Aorta (tissue), 5 donors: ENCODE measurements at regions of chrX and their contacts with region 1.

Region 1: GRCh38 chrX:47560831-47561652 is at the start of gene ARAF:
- DNase-seq: peak; percentile 96 to 99
- ATAC-seq: peak; percentile 95
- H3K4me3 ChIP-seq: peak within 1 kb of the TSS; percentile 31 to 80
- H3K27ac ChIP-seq: peak within 1 kb of the TSS in 1 of 2 donors; percentile 95
- H3K4me1 ChIP-seq: no peaks in the 10 kb centered on the region
- H3K27me3 ChIP-seq: no peaks in the 10 kb centered on the region
- total RNA-seq, gene ARAF: 51.5 to 59.0 TPM

Region 2: GRCh38 chrX:47515941-47516649 is 44.9 kb before region 1 on chrX:
- intact Hi-C with region 1: no loop called
- DNase-seq: no peak
- ATAC-seq: no peak
- H3K4me3 ChIP-seq: no peak overlapping the region
- H3K27ac ChIP-seq: no peak overlapping the region
- H3K4me1 ChIP-seq: no peaks in the 10 kb centered on the region
- H3K27me3 ChIP-seq: no peaks in the 10 kb centered on the region

Region 3: DNA sequence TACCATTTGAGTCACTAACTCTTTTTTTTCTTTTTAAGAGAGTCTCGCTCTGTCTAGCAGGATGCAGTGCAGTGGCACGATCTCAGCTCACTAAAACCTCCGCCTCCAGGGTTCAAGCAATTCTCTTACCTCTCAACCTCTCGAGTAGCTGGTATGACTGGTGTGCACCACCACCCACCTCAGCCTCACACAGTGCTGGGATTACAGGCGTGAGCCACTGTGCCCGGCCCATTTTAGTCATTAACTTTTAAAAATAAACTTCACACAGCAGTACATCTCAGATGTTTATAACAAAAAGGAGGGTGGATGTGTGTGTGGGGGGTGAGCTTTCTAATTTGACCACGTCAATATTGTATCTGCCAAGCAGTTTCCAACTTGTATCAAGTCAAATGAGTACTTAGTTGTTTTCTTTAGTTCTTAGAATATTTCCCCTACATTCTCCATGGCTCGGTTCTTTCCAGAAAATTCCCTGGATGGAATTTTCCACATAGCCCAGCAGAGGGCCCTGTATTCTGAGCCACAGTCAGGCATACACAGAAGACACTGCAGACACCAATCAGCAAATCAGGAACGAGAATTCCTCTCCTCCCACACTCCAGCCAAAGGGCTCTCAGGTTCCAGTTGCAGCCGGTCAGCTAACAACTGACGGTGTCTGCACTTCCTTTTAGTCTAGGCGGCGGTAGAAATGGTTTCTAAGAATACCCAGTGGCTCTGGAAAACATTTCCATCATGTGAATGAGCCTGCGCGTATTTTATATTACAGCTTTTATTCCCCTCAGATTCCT is 20.1 kb before region 1 on chrX:
- intact Hi-C with region 1: loop called in 1 of 2 experiments (anchors 1 kb)
- DNase-seq: peak; percentile 77 to 83
- ATAC-seq: peak; percentile 95
- H3K4me3 ChIP-seq: no peak overlapping the region
- H3K27ac ChIP-seq: peak overlapping the region in 1 of 2 donors; percentile 42
- H3K4me1 ChIP-seq: no peaks in the 10 kb centered on the region
- H3K27me3 ChIP-seq: no peaks in the 10 kb centered on the region

Region 4: GRCh38 chrX:47644557-47645091 is 83.6 kb after region 1 on chrX:
- intact Hi-C with region 1: loop called in 1 of 2 experiments (anchors 5 kb)
- DNase-seq: no peak
- ATAC-seq: peak; percentile 55
- H3K4me3 ChIP-seq: no peak overlapping the region
- H3K27ac ChIP-seq: no peak overlapping the region
- H3K4me1 ChIP-seq: no peaks in the 10 kb centered on the region
- H3K27me3 ChIP-seq: no peaks in the 10 kb centered on the region